AG04450 (cell line): ENCODE measurements at regions of chr2 and their contacts with region 1.

Region 1: GRCh38 chr2:201451292-201452057 is at the starts of genes STRADB and TRAK2:
- DNase-seq: peak; percentile 68
- H3K4me3 ChIP-seq: peak within 1 kb of the TSS; percentile 86
- H3K27ac ChIP-seq: peak within 1 kb of the TSS; percentile 69
- H3K27me3 ChIP-seq: no peaks in the 10 kb centered on the region
- CTCF ChIP-seq: peak; percentile 10; the same call in 1 of the 2 replicates
- polyA plus RNA-seq, gene STRADB: 29.8 and 34.7 TPM in 2 replicates
- polyA plus RNA-seq, gene TRAK2: 32.7 and 38.4 TPM in 2 replicates

Region 2: DNA sequence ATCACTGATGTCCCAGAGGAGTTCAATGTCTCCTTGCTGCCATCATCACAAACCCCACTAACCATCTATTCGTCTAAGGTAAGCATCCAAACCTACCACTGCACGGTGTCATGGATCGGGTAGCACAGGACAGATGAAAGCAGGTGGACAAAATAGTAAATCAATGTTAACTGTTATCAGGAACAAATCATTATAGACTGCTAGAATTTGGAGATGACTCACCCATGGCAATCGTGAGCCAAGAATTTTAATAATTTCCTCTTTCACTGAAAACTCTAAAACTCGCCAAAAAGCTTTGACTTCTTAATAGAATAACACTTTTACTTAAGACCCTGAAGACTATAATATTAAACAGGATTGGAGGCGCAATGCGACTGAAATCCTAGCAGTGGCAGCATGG is 673.4 kb before region 1 on chr2:
- CTCF ChIA-PET with region 1: no interaction called
- POLR2A ChIA-PET with region 1: no interaction called
- DNase-seq: no peak
- H3K4me3 ChIP-seq: no peak overlapping the region
- H3K27ac ChIP-seq: no peak overlapping the region
- H3K27me3 ChIP-seq: no peaks in the 10 kb centered on the region
- CTCF ChIP-seq: no peak

Region 3: DNA sequence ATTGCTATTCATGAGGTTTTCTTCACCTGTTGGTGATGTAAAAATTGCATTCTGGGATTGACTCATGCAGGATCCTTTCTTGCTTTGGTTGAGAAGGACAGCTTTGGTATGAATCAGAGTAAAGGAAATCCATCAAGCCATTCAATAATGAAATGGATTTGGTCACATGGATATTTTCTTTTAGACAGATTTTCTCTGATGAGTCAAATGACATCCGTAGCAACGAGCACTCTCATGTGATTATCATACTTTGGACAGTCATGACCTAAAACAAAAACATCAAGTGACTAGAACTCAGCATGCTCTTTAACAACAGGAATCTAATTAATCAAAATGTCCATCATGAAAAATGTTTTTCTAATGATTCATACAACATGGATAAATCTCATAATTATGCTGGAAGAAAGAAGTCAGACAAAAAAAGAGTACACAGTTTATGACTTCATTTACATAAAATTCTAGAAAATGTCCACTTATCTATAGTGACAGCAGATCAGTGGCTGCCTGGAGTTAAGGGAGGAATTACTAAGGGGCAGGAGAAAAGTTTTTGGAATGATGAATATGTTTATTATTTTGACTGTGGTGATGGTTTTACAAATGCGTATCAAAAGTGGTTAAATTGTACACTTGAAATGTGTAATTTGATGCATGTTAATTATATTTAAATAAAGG is 30.9 kb before region 1 on chr2:
- CTCF ChIA-PET with region 1: no interaction called
- POLR2A ChIA-PET with region 1: no interaction called
- DNase-seq: no peak
- H3K4me3 ChIP-seq: no peak overlapping the region
- H3K27ac ChIP-seq: no peak overlapping the region
- H3K27me3 ChIP-seq: no peaks in the 10 kb centered on the region
- CTCF ChIP-seq: no peak

Region 4: GRCh38 chr2:201432038-201432620 is 19.3 kb before region 1 on chr2:
- CTCF ChIA-PET with region 1: interaction called, 3 read pairs
- POLR2A ChIA-PET with region 1: interaction called, 11 read pairs
- DNase-seq: no peak
- H3K4me3 ChIP-seq: no peak overlapping the region
- H3K27ac ChIP-seq: no peak overlapping the region
- H3K27me3 ChIP-seq: no peaks in the 10 kb centered on the region
- CTCF ChIP-seq: no peak

Region 5: DNA sequence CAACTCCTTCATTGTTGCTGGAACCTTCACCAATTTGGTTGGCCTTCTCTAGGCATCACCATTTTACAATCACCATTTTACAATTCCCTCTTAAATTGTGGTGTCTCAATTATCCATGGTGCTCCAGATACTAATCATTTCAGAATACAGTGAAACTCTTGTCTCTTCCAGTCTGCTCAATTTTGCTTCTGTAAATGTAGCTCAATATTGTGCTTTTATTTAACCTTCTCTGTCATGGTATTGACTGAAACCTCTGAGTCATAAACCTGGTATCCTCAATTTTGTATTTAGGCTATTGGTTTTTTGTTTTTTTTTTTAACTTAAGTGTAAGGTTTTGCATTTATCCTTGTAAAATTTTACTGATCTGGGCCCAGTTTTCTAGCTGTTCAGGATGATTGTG is 16.2 kb after region 1 on chr2:
- CTCF ChIA-PET with region 1: no interaction called
- POLR2A ChIA-PET with region 1: interaction called, 11 read pairs
- DNase-seq: no peak
- H3K4me3 ChIP-seq: no peak overlapping the region
- H3K27ac ChIP-seq: no peak overlapping the region
- H3K27me3 ChIP-seq: no peaks in the 10 kb centered on the region
- CTCF ChIP-seq: no peak

Region 6: GRCh38 chr2:201488012-201488411 is 36.5 kb after region 1 on chr2:
- CTCF ChIA-PET with region 1: no interaction called
- POLR2A ChIA-PET with region 1: no interaction called
- DNase-seq: no peak
- H3K4me3 ChIP-seq: no peak overlapping the region
- H3K27ac ChIP-seq: no peak overlapping the region
- H3K27me3 ChIP-seq: no peaks in the 10 kb centered on the region
- CTCF ChIP-seq: no peak

Region 7: GRCh38 chr2:202808754-202809153 is 1357.3 kb after region 1 on chr2:
- CTCF ChIA-PET with region 1: no interaction called
- POLR2A ChIA-PET with region 1: no interaction called
- DNase-seq: no peak
- H3K4me3 ChIP-seq: no peak overlapping the region
- H3K27ac ChIP-seq: no peak overlapping the region
- H3K27me3 ChIP-seq: no peaks in the 10 kb centered on the region
- CTCF ChIP-seq: no peak